HCT116 (cell line): ENCODE measurements at regions of chr2 and their contacts with region 1.

Region 1: DNA sequence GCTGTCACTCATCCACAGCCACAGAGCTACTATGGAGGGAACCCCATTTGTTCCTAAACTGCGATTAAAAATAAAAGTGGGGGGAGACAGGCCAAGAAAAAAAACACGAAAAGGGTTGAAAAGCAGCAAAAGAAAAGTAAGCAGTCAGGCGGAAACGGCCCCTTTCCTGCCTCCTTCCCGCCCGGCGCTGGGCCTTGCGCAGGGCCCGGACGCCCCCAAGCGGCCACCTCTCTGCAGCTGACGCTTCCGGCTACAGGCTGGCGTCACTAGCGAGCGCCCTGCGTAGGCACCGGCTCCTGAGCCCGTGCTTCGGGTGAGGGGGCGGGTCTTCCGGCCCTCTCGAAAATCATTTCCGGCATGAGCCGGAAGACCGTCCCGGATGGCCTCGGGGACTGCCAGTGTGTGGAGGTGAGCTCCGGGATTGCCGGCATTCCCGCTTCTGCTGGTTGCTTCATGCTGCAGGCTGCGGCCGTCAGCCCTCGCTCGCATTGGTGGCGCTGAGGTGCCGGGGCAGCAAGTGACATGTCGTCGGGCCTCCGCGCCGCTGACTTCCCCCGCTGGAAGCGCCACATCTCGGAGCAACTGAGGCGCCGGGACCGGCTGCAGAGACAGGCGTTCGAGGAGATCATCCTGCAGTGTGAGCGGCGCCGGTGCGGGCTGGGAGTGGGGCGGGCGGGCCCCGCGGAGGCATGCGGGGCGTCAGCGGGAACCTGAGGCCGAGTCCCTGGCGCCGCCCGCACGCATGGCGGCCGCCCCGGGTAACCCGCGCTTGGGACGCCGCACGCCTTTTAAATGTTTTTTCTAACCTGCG is at the start of gene ATG16L1:
- DNase-seq: peak; percentile 90
- ATAC-seq: peak; percentile 86
- H3K4me3 ChIP-seq: peak within 1 kb of the TSS; percentile 89 to 91
- H3K27ac ChIP-seq: peak within 1 kb of the TSS; percentile 56
- H3K4me1 ChIP-seq: peaks cover 23 to 46% of the 10 kb centered on the region in 2 experiments
- H3K27me3 ChIP-seq: no peaks in the 10 kb centered on the region
- CTCF ChIP-seq: peak; percentile 89 to 97 (median 92)
- POLR2A ChIP-seq: peak; percentile 59
- RAD21 ChIP-seq: peak; percentile 100
- total RNA-seq, gene ATG16L1: 43.4 TPM

Region 2: GRCh38 chr2:232761301-232761907 is 490.1 kb before region 1 on chr2:
- CTCF ChIA-PET with region 1: no interaction called
- POLR2A ChIA-PET with region 1: no interaction called
- RAD21 ChIA-PET with region 1: no interaction called
- intact Hi-C with region 1: loop called (anchors 10 kb)
- DNase-seq: peak; percentile 28
- ATAC-seq: peak; percentile 75
- H3K4me3 ChIP-seq: no peak overlapping the region
- H3K27ac ChIP-seq: no peak overlapping the region
- H3K4me1 ChIP-seq: no peaks in the 10 kb centered on the region
- H3K27me3 ChIP-seq: no peaks in the 10 kb centered on the region
- CTCF ChIP-seq: peak; percentile 42 to 74 (median 63); a peak in 5 of 6 replicates
- POLR2A ChIP-seq: no peak
- RAD21 ChIP-seq: peak; percentile 70

Region 3: DNA sequence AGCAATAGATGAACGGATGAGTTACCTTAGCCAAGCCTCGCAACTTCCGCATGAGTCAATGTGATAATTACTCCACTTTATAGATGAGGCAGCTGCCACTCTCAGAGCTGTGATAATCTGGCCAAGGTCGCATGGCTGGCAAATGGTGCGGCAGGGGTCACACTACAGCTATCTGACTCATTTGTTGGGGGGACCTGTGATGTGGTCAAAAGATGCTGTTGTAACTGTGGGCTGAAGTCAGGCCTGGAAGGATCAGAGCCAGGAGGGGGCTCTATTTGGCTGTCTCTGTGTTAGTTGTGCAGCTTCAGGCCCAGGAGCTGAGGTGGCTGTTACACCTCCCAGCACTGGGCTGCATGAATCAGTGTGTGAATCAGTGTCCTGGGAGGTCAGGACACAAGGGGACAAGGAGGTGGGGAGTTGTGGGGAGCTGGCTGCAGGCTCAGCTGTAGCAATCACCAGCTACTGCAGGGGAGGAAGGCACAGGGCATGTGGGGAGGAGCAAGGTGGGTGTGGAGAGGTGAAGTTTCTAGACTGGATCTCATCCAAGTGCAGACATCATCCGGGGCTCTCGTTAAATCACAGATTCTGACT is 271.5 kb before region 1 on chr2:
- CTCF ChIA-PET with region 1: no interaction called
- POLR2A ChIA-PET with region 1: no interaction called
- RAD21 ChIA-PET with region 1: no interaction called
- intact Hi-C with region 1: loop called (anchors 1 kb)
- DNase-seq: peak; percentile 90
- ATAC-seq: peak; percentile 88
- H3K4me3 ChIP-seq: peak overlapping the region in 1 of 2 experiments; percentile 26; a peak in 1 of 4 replicates
- H3K27ac ChIP-seq: peak overlapping the region; percentile 50
- H3K4me1 ChIP-seq: peaks cover 36 to 49% of the 10 kb centered on the region in 2 experiments
- H3K27me3 ChIP-seq: no peaks in the 10 kb centered on the region; the same call in 1 of the 2 replicates
- CTCF ChIP-seq: peak in 2 of 3 experiments; percentile 31 to 40; a peak in 2 of 6 replicates
- POLR2A ChIP-seq: no peak
- RAD21 ChIP-seq: no peak

Region 4: GRCh38 chr2:233098615-233099014 is 152.9 kb before region 1 on chr2:
- CTCF ChIA-PET with region 1: interaction called, 7 read pairs
- POLR2A ChIA-PET with region 1: no interaction called
- RAD21 ChIA-PET with region 1: no interaction called
- intact Hi-C with region 1: loop called (anchors 1 kb)
- DNase-seq: peak; percentile 10
- ATAC-seq: peak; percentile 81
- H3K4me3 ChIP-seq: no peak overlapping the region
- H3K27ac ChIP-seq: no peak overlapping the region
- H3K4me1 ChIP-seq: peaks cover 0 to 3% of the 10 kb centered on the region in 2 experiments; a peak in 2 of 4 replicates
- H3K27me3 ChIP-seq: no peaks in the 10 kb centered on the region
- CTCF ChIP-seq: peak; percentile 40 to 71 (median 55); a peak in 5 of 6 replicates
- POLR2A ChIP-seq: no peak
- RAD21 ChIP-seq: peak; percentile 66